Transverse colon (tissue), 4 donors: ENCODE measurements at regions of chrX and their contacts with region 1.

Region 1: DNA sequence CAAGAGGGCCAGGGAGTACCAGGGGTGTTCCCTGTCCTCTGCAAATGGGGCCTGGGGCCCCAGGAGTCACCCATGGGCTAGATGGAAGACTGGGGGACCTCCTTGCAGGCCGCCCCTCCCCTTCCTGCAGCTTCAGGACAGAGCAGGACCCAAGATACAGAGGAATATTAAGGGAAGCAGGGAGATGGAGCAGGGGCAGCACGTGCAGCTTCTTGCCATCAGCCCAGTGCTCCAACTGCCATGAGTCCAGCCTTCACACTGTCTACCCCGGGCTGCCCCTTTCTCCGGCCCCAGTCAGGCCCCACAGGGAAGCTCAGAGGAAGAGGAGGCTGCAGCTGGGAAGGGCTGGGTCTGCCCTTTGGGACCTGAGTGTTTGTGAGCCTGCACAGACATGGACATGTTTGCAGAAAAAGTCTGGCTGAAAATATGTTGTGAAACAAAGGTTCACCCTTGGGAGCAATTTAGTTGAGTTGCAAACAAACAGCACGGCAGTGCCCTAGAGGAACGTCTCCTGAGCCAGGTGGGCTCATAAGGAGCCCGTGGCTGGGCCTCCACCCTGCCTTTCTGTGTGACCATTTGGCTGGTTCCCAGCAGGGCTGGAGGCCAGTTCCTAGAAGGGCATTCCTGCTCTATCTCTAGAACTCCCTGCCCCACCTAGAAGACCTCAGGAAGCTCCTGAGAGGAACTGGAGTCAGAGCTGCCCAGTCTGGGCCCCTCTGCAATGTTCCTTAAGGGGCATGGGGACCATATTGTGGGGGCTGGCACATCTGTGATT is 8.9 kb downstream of the FATE1 start:
- DNase-seq: no peak
- H3K4me3 ChIP-seq: no peak overlapping the region
- H3K27ac ChIP-seq: no peak overlapping the region
- H3K4me1 ChIP-seq: no peaks in the 10 kb centered on the region
- H3K27me3 ChIP-seq: no peaks in the 10 kb centered on the region
- CTCF ChIP-seq: no peak
- EP300 ChIP-seq: no peak
- POLR2A ChIP-seq: no peak

Region 2: GRCh38 chrX:151563449-151563848 is 161.3 kb before region 1 on chrX and contains the start of gene PASD1:
- in situ Hi-C with region 1: no loop called
- intact Hi-C with region 1: no loop called
- DNase-seq: no peak
- H3K4me3 ChIP-seq: no peak within 1 kb of the TSS
- H3K27ac ChIP-seq: no peak within 1 kb of the TSS
- H3K4me1 ChIP-seq: no peaks in the 10 kb centered on the region
- H3K27me3 ChIP-seq: no peaks in the 10 kb centered on the region
- CTCF ChIP-seq: no peak
- EP300 ChIP-seq: no peak
- POLR2A ChIP-seq: no peak
- total RNA-seq, gene PASD1: not detected

Region 3: GRCh38 chrX:152154050-152154449 is 429.3 kb after region 1 on chrX:
- in situ Hi-C with region 1: no loop called
- intact Hi-C with region 1: no loop called
- DNase-seq: no peak
- H3K4me3 ChIP-seq: no peak overlapping the region
- H3K27ac ChIP-seq: no peak overlapping the region
- H3K4me1 ChIP-seq: no peaks in the 10 kb centered on the region
- H3K27me3 ChIP-seq: no peaks in the 10 kb centered on the region
- CTCF ChIP-seq: no peak
- EP300 ChIP-seq: no peak
- POLR2A ChIP-seq: no peak

Region 4: GRCh38 chrX:152821145-152821765 is 1096.5 kb after region 1 on chrX:
- in situ Hi-C with region 1: loop called in 1 of 4 experiments (anchors 25 kb)
- intact Hi-C with region 1: no loop called
- DNase-seq: peak; percentile 46
- H3K4me3 ChIP-seq: no peak overlapping the region
- H3K27ac ChIP-seq: no peak overlapping the region
- H3K4me1 ChIP-seq: no peaks in the 10 kb centered on the region
- H3K27me3 ChIP-seq: no peaks in the 10 kb centered on the region
- CTCF ChIP-seq: peak; percentile 34 to 47 (median 44)
- EP300 ChIP-seq: no peak
- POLR2A ChIP-seq: no peak